ENCODE measurements at regions of chr11 and their contacts with region 1.

Region 1: GRCh38 chr11:11787305-11788062 is 54.3 kb upstream of the USP47 start:
- DNase-seq: peak; percentile 64 to 70
- ATAC-seq: peak; percentile 91 to 98
- H3K4me3 ChIP-seq: no peak overlapping the region
- H3K27ac ChIP-seq: no peak overlapping the region
- H3K4me1 ChIP-seq: no peaks in the 10 kb centered on the region
- CTCF ChIP-seq: peak; percentile 96
- EP300 ChIP-seq: no peak
- POLR2A ChIP-seq: no peak
- RAD21 ChIP-seq: peak; percentile 98

Region 2: GRCh38 chr11:10933455-10934292 is 853.8 kb before region 1 on chr11:
- CTCF ChIA-PET with region 1: interaction called, 41 read pairs
- POLR2A ChIA-PET with region 1: no interaction called
- DNase-seq: peak; percentile 90 to 93
- ATAC-seq: peak; percentile 75 to 86
- H3K4me3 ChIP-seq: peak overlapping the region; percentile 45
- H3K27ac ChIP-seq: peak overlapping the region; percentile 98
- H3K4me1 ChIP-seq: peaks cover 40% of the 10 kb centered on the region
- CTCF ChIP-seq: peak; percentile 97
- EP300 ChIP-seq: no peak
- POLR2A ChIP-seq: peak; percentile 18; the same call in 1 of the 2 replicates
- RAD21 ChIP-seq: peak; percentile 97 to 99

Region 3: GRCh38 chr11:11028017-11028692 is 759.3 kb before region 1 on chr11:
- CTCF ChIA-PET with region 1: interaction called, 128 read pairs
- POLR2A ChIA-PET with region 1: interaction called, 6 read pairs
- DNase-seq: peak; percentile 44 to 65
- ATAC-seq: peak; percentile 90 to 97
- H3K4me3 ChIP-seq: no peak overlapping the region
- H3K27ac ChIP-seq: no peak overlapping the region
- H3K4me1 ChIP-seq: peaks cover 13% of the 10 kb centered on the region; the same call in 2 of the 3 replicates
- CTCF ChIP-seq: peak; percentile 85
- EP300 ChIP-seq: no peak
- POLR2A ChIP-seq: no peak
- RAD21 ChIP-seq: peak; percentile 82 to 90

Region 4: DNA sequence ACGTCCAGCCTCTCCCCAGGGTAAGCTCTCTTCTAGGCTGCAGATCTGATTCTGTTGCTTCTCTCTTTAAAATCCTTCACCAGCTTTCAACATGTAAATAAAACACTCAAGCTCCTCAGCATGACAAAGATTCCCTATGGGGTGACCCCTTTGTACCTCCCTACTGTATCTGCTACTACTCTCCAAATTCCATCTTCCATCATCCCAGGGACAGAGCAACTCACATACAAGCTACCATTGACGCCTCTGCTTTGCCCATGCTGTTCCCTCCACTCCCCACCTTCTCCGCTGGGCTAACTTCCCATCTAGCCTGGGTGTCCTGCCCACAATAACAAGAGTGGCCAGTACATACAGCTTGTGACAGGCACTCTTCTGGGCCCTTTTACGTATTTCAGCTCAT is 722.1 kb before region 1 on chr11:
- CTCF ChIA-PET with region 1: interaction called, 16 read pairs
- POLR2A ChIA-PET with region 1: no interaction called
- DNase-seq: no peak
- ATAC-seq: no peak
- H3K4me3 ChIP-seq: no peak overlapping the region
- H3K27ac ChIP-seq: no peak overlapping the region
- H3K4me1 ChIP-seq: no peaks in the 10 kb centered on the region
- CTCF ChIP-seq: no peak
- EP300 ChIP-seq: no peak
- POLR2A ChIP-seq: no peak
- RAD21 ChIP-seq: no peak

Region 5: GRCh38 chr11:11621573-11622319 is 165.7 kb before region 1 on chr11 and contains the start of gene GALNT18:
- CTCF ChIA-PET with region 1: interaction called, 21 read pairs
- POLR2A ChIA-PET with region 1: no interaction called
- DNase-seq: peak; percentile 92 to 94
- ATAC-seq: peak; percentile 82 to 94
- H3K4me3 ChIP-seq: peak within 1 kb of the TSS; percentile 56
- H3K27ac ChIP-seq: peak within 1 kb of the TSS; percentile 83 to 90
- H3K4me1 ChIP-seq: peaks cover 31% of the 10 kb centered on the region
- CTCF ChIP-seq: peak; percentile 26; the same call in 1 of the 3 replicates
- EP300 ChIP-seq: no peak
- POLR2A ChIP-seq: peak; percentile 79
- RAD21 ChIP-seq: peak; percentile 9 to 28; a peak in 1 of 5 replicates
- polyA plus RNA-seq, gene GALNT18: 6.7 TPM in 2 replicates

Region 6: DNA sequence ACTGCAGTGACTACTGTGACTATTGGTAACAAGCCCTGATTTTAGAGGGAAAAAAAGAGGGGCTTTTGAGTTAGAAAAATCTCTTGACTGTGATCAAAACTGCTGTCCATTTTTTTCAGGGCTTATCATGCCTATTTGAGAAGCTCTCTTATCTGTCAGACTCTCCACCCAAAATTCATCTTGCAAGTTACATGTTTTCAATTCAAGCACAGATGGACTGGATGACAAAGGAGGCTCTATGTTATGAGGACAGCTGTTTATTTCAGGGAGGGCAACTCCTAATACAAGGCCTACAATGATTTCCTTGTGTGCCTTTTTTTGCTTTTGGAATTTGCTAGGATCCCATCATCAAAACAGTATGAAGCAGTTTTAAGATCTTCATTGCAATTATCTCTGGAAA is 19.1 kb after region 1 on chr11:
- CTCF ChIA-PET with region 1: interaction called, 11 read pairs
- POLR2A ChIA-PET with region 1: no interaction called
- DNase-seq: no peak
- ATAC-seq: no peak
- H3K4me3 ChIP-seq: no peak overlapping the region
- H3K27ac ChIP-seq: no peak overlapping the region
- H3K4me1 ChIP-seq: no peaks in the 10 kb centered on the region
- CTCF ChIP-seq: no peak
- EP300 ChIP-seq: no peak
- POLR2A ChIP-seq: no peak
- RAD21 ChIP-seq: no peak

Region 7: DNA sequence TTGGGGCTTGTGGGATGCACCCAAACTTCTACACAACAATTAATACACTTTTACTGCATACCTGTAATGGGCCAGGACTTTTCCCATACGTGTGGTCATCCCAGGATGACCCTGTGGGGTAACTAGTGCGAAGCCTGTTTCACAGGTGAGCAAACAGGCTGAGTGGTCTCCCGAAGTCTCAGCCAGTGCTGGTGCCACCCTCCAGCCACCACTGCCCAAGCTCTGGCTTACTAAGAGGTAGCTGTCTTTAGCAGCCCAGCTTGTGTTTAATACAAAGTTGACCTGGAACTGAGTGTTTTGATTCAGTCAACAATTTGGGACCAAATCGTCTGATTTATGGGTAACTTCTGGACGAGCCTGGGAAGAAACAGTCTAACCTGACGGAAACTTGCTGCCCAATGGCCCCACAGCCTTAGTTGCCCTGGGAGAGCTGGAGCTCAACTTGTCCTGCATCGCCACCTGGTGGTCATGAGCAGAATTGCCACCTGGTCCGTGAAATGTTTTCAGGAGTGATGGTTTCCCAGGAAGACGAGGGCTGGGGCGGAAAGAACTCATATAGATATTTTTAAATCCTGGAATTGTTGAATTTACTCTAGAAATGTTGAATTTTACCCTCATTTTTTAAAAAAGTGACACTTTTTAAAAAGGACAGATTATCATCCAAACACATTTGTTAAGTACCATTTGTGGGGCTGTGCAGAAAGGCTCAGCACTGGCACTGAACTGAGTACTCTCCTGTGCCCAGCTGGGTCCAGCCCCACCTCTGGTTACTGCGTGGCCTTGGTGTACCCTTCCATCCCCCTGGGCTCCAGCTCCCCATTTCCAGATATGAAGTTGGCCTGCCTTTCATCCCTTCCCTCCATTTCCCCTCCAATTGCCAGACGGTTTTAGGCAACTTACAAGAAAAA is 494.3 kb after region 1 on chr11:
- CTCF ChIA-PET with region 1: interaction called, 14 read pairs
- POLR2A ChIA-PET with region 1: no interaction called
- DNase-seq: peak; percentile 77 to 89
- ATAC-seq: peak; percentile 57 to 83; a peak in 5 of 6 replicates
- H3K4me3 ChIP-seq: no peak overlapping the region
- H3K27ac ChIP-seq: peak overlapping the region; percentile 58 to 80
- H3K4me1 ChIP-seq: peaks cover 38% of the 10 kb centered on the region
- CTCF ChIP-seq: peak; percentile 96
- EP300 ChIP-seq: no peak
- POLR2A ChIP-seq: no peak
- RAD21 ChIP-seq: peak; percentile 99 to 100